B cell (primary cell): ENCODE measurements at regions of chr17 and their contacts with region 1.

Region 1: DNA sequence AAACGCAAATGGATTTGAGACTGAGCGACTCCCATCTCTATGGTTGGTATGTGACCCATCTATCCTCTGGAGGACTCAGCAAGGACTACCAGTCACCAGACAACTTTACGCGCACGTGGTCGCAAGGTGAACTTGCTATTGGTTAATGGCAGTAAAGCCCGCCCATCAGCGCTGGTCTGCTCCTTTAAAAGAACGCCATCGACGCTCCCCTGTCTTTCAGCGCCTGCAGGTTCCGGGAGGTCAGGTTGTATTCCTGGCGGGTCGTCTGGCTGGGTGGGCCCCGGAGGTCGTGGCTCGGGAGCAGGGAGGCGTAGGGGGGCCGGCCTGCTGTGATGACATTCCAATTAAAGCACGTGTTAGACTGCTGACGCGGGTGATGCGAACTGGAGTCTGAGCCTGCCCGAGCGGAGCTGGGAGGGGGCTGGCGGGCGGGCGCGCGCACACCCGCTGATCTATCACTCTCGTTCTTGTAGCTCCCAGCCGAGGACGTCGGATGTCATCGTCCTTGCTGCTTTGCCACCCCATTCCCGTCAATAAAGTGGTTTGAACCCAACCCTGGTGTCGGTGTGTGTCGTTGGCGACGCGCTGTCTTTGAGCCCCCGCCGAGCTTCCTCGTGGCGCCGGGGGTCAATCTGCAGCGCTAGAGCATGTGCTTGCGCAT is 15.9 kb upstream of the ERN1 start:
- DNase-seq: peak; percentile 98
- ATAC-seq: peak; percentile 93
- H3K4me3 ChIP-seq: peak overlapping the region; percentile 77 to 95 (median 92)
- H3K4me3 Mint-ChIP-seq: no peak overlapping the region
- H3K27ac ChIP-seq: peak overlapping the region; percentile 86 to 88
- H3K27ac Mint-ChIP-seq: no peak overlapping the region
- H3K4me1 ChIP-seq: peaks cover 14 to 18% of the 10 kb centered on the region in 2 donors
- H3K4me1 Mint-ChIP-seq: peaks cover 15% of the 10 kb centered on the region
- H3K27me3 ChIP-seq: no peaks in the 10 kb centered on the region
- H3K27me3 Mint-ChIP-seq: no peaks in the 10 kb centered on the region
- CTCF ChIP-seq: no peak

Region 2: GRCh38 chr17:63741221-63742049 is 404.5 kb before region 1 on chr17 and contains the start of gene STRADA:
- CTCF ChIA-PET with region 1: no interaction called
- POLR2A ChIA-PET with region 1: no interaction called
- intact Hi-C with region 1: loop called (anchors 1 kb)
- DNase-seq: peak; percentile 99
- ATAC-seq: peak; percentile 89
- H3K4me3 ChIP-seq: peak within 1 kb of the TSS; percentile 85 to 99 (median 93)
- H3K4me3 Mint-ChIP-seq: peak within 1 kb of the TSS; percentile 89
- H3K27ac ChIP-seq: peak within 1 kb of the TSS; percentile 97
- H3K27ac Mint-ChIP-seq: peak within 1 kb of the TSS; percentile 93
- H3K4me1 ChIP-seq: peaks cover 15 to 28% of the 10 kb centered on the region in 2 donors
- H3K4me1 Mint-ChIP-seq: peaks cover 28% of the 10 kb centered on the region
- H3K27me3 ChIP-seq: no peaks in the 10 kb centered on the region
- H3K27me3 Mint-ChIP-seq: no peaks in the 10 kb centered on the region
- CTCF ChIP-seq: no peak
- total RNA-seq, gene STRADA: 87.4 and 93.2 TPM in 2 replicates

Region 3: DNA sequence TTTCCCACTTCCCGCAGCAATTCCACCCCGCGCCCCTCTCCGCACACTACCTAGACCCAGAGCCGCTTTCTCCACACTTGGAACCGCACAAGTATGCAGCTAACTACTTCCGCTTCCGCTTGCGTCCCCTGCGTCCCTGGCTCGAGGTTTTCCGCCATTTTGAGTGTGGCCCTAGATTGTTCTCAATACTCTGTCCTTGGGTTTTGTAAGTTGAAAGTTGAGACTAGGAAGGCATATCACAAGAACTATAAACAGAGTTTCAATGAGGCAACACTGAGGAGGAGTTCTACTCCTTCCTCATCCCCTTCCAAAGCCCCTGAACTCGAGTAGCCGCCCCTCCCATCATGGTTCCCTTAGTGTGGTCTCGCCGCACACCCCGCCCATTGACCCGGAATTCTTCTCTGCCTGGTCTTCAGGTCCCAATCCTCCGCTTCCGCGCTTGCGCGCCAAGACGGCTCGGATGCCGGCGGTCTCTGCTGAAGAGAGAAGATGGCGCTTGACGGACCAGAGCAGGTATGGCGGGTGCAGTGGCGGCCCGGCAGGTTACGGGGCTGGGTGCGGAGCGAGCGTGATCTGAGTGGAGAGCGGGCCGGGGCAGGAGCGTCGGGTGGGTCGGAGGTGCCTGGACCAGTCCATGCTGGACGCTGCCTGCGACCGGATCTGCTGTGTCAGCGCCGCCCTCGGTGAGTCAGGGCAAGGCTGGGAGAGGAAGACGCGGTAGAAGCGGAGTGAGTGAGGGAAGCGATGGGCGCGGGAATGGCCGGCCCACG is 318.7 kb before region 1 on chr17 and contains the starts of genes FTSJ3 and PSMC5:
- CTCF ChIA-PET with region 1: no interaction called
- POLR2A ChIA-PET with region 1: no interaction called
- intact Hi-C with region 1: loop called (anchors 1 kb)
- DNase-seq: peak; percentile 98
- ATAC-seq: peak; percentile 95
- H3K4me3 ChIP-seq: peak within 1 kb of the TSS; percentile 78 to 92 (median 81)
- H3K4me3 Mint-ChIP-seq: peak within 1 kb of the TSS; percentile 98
- H3K27ac ChIP-seq: peak within 1 kb of the TSS; percentile 70 to 92
- H3K27ac Mint-ChIP-seq: peak within 1 kb of the TSS; percentile 98
- H3K4me1 ChIP-seq: peaks cover 38 to 53% of the 10 kb centered on the region in 2 donors
- H3K4me1 Mint-ChIP-seq: peaks cover 73% of the 10 kb centered on the region
- H3K27me3 ChIP-seq: no peaks in the 10 kb centered on the region
- H3K27me3 Mint-ChIP-seq: no peaks in the 10 kb centered on the region
- CTCF ChIP-seq: peak; percentile 72
- total RNA-seq, gene FTSJ3: 75.9 and 78.2 TPM in 2 replicates
- total RNA-seq, gene PSMC5: 84.7 and 87.1 TPM in 2 replicates

Region 4: GRCh38 chr17:63984651-63985386 is 161.1 kb before region 1 on chr17:
- CTCF ChIA-PET with region 1: no interaction called
- POLR2A ChIA-PET with region 1: no interaction called
- intact Hi-C with region 1: no loop called
- DNase-seq: no peak
- ATAC-seq: peak; percentile 80
- H3K4me3 ChIP-seq: no peak overlapping the region
- H3K4me3 Mint-ChIP-seq: no peak overlapping the region
- H3K27ac ChIP-seq: no peak overlapping the region
- H3K27ac Mint-ChIP-seq: no peak overlapping the region
- H3K4me1 ChIP-seq: peaks cover 8 to 17% of the 10 kb centered on the region in 2 donors
- H3K4me1 Mint-ChIP-seq: peaks cover 19% of the 10 kb centered on the region
- H3K27me3 ChIP-seq: no peaks in the 10 kb centered on the region
- H3K27me3 Mint-ChIP-seq: no peaks in the 10 kb centered on the region
- CTCF ChIP-seq: no peak

Region 5: GRCh38 chr17:64051153-64051552 is 94.7 kb before region 1 on chr17:
- CTCF ChIA-PET with region 1: no interaction called
- POLR2A ChIA-PET with region 1: no interaction called
- intact Hi-C with region 1: no loop called
- DNase-seq: no peak
- ATAC-seq: no peak
- H3K4me3 ChIP-seq: no peak overlapping the region
- H3K4me3 Mint-ChIP-seq: no peak overlapping the region
- H3K27ac ChIP-seq: no peak overlapping the region
- H3K27ac Mint-ChIP-seq: no peak overlapping the region
- H3K4me1 ChIP-seq: peaks cover 5 to 13% of the 10 kb centered on the region in 2 donors
- H3K4me1 Mint-ChIP-seq: peaks cover 10% of the 10 kb centered on the region
- H3K27me3 ChIP-seq: no peaks in the 10 kb centered on the region
- H3K27me3 Mint-ChIP-seq: no peaks in the 10 kb centered on the region
- CTCF ChIP-seq: no peak

Region 6: GRCh38 chr17:64216338-64217248 is 70.7 kb after region 1 on chr17:
- CTCF ChIA-PET with region 1: interaction called, 3 read pairs
- POLR2A ChIA-PET with region 1: interaction called, 4 read pairs
- intact Hi-C with region 1: loop called (anchors 2 kb)
- DNase-seq: peak; percentile 60
- ATAC-seq: peak; percentile 77
- H3K4me3 ChIP-seq: no peak overlapping the region
- H3K4me3 Mint-ChIP-seq: peak overlapping the region; percentile 46
- H3K27ac ChIP-seq: peak overlapping the region; percentile 60 to 84
- H3K27ac Mint-ChIP-seq: peak overlapping the region; percentile 85
- H3K4me1 ChIP-seq: peaks cover 27 to 31% of the 10 kb centered on the region in 2 donors
- H3K4me1 Mint-ChIP-seq: peaks cover 34% of the 10 kb centered on the region
- H3K27me3 ChIP-seq: no peaks in the 10 kb centered on the region
- H3K27me3 Mint-ChIP-seq: no peaks in the 10 kb centered on the region
- CTCF ChIP-seq: no peak

Region 7: DNA sequence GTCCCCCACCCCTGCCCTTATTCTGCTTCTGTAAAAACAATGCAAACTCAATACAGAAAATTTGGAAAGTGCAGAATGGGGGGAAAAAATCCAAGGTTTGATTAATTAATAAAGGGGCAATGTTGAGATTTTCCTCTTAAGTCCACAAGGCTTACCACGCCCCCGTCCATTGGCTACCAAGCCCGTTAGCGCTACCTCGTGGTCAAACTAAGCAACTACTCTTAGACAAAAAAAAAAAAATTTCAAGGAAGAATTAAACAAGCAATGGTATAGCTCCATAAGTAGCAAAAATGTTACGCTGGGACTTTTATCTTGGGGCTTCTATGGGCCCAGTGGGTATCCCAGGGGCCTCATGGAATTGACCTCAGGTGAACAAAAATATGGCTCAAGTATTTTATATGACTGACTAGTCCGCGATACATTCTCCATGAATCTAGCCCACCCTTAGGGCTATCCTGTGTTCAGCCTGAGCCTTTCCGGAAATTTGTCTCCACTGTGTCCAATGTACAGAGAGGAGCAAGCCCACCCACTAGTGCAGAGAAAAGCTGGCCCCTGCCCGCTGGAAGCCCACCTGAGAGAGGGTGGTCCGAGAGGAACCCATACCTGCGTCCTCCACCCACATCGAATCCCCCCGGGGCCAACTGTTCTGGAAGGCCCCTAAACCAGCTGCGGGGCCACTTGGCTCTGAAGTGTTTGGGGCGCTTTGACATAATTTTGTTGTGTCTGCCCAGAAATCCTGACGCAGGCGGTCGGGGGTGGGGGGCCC is 136.3 kb after region 1 on chr17:
- CTCF ChIA-PET with region 1: interaction called, 5 read pairs
- POLR2A ChIA-PET with region 1: no interaction called
- intact Hi-C with region 1: loop called (anchors 1 kb)
- DNase-seq: peak; percentile 74
- ATAC-seq: peak; percentile 45
- H3K4me3 ChIP-seq: no peak overlapping the region
- H3K4me3 Mint-ChIP-seq: no peak overlapping the region
- H3K27ac ChIP-seq: no peak overlapping the region
- H3K27ac Mint-ChIP-seq: no peak overlapping the region
- H3K4me1 ChIP-seq: no peaks in the 10 kb centered on the region
- H3K4me1 Mint-ChIP-seq: no peaks in the 10 kb centered on the region
- H3K27me3 ChIP-seq: no peaks in the 10 kb centered on the region
- H3K27me3 Mint-ChIP-seq: peaks cover 3% of the 10 kb centered on the region
- CTCF ChIP-seq: peak; percentile 80